ENCODE measurements at regions of chr1 and their contacts with region 1.

Region 1: GRCh38 chr1:160830321-160831153 is 32.1 kb downstream of the CD244 start:
- DNase-seq: peak in 1 of 2 experiments; percentile 91
- H3K4me3 ChIP-seq: no peak overlapping the region
- H3K27ac ChIP-seq: no peak overlapping the region
- H3K4me1 ChIP-seq: no peaks in the 10 kb centered on the region
- H3K27me3 ChIP-seq: no peaks in the 10 kb centered on the region
- CTCF ChIP-seq: peak; percentile 82 to 93 (median 89)
- EP300 ChIP-seq: no peak
- POLR2A ChIP-seq: no peak
- RAD21 ChIP-seq: peak; percentile 75 to 80

Region 2: GRCh38 chr1:159854693-159855192 is 975.8 kb before region 1 on chr1:
- CTCF ChIA-PET with region 1: no interaction called
- POLR2A ChIA-PET with region 1: no interaction called
- DNase-seq: peak in 1 of 2 experiments; percentile 73
- H3K4me3 ChIP-seq: peak overlapping the region; percentile 38 to 84 (median 53)
- H3K27ac ChIP-seq: no peak overlapping the region
- H3K4me1 ChIP-seq: no peaks in the 10 kb centered on the region
- H3K27me3 ChIP-seq: peaks cover 7 to 33% (median 24%) of the 10 kb centered on the region in 4 experiments
- CTCF ChIP-seq: no peak
- EP300 ChIP-seq: no peak
- POLR2A ChIP-seq: no peak
- RAD21 ChIP-seq: no peak

Region 3: DNA sequence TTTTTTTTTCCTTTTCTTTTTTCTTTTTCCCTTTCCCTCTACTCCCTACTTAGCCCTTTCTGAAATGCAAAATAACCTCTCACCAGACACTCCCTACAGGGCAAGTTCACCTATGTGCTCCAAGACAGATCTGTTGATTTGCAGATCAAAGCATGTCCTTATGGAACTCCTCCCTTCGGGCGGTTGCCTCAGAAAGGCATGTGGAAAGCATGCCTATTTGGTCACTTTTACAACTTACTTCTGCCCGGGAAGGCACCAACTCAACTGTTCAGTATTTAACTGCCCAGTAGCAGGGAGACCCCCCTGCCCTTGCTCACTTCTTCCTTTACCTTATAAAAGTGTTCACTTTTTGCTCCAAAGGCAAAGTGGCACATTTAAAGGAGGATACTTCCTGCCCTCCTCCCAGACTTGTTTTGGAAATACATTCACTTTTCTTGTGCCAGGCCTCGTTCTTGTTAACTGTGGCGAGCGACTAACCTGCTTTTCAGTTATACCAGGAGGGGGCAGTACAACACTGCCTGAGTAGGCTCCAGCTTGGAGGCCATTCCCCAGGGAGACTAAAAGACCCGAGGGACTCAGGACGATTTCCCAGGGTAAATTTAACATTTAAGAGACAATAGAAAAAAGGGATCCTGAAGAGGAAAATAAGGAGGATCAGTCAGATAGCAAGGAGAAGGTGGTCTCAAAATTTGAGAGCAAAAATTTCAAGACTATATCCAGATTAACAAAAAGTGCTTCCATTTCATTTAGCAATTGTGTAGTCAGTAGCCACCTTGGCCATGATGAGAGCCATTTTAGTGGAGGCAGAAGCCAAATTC is 103.8 kb before region 1 on chr1:
- CTCF ChIA-PET with region 1: interaction called, 41 read pairs
- POLR2A ChIA-PET with region 1: no interaction called
- DNase-seq: peak; percentile 62 to 68
- H3K4me3 ChIP-seq: no peak overlapping the region
- H3K27ac ChIP-seq: peak overlapping the region; percentile 12; the same call in 1 of the 2 replicates
- H3K4me1 ChIP-seq: peaks cover 0 to 5% (median 2%) of the 10 kb centered on the region in 4 experiments; a peak in 3 of 7 replicates
- H3K27me3 ChIP-seq: no peaks in the 10 kb centered on the region
- CTCF ChIP-seq: peak; percentile 59 to 92 (median 81)
- EP300 ChIP-seq: no peak
- POLR2A ChIP-seq: no peak
- RAD21 ChIP-seq: peak; percentile 95 to 96

Region 4: GRCh38 chr1:160877221-160877620 is 46.7 kb after region 1 on chr1:
- CTCF ChIA-PET with region 1: interaction called, 33 read pairs
- POLR2A ChIA-PET with region 1: no interaction called
- DNase-seq: no peak
- H3K4me3 ChIP-seq: no peak overlapping the region
- H3K27ac ChIP-seq: no peak overlapping the region
- H3K4me1 ChIP-seq: no peaks in the 10 kb centered on the region; a peak in 1 of 7 replicates
- H3K27me3 ChIP-seq: no peaks in the 10 kb centered on the region
- CTCF ChIP-seq: peak in 2 of 3 experiments; percentile 42 to 45; a peak in 3 of 4 replicates
- EP300 ChIP-seq: no peak
- POLR2A ChIP-seq: no peak
- RAD21 ChIP-seq: peak; percentile 13 to 38; a peak in 2 of 4 replicates

Measured in H1 (cell line).